ENCODE measurements at regions of chr19 and their contacts with region 1.

Region 1: GRCh38 chr19:39792999-39793546 is 14.4 kb downstream of the LEUTX start:
- DNase-seq: peak; percentile 100
- ATAC-seq: peak; percentile 98
- H3K4me3 ChIP-seq: peak overlapping the region; percentile 29 to 42
- H3K27ac ChIP-seq: no peak overlapping the region
- H3K4me1 ChIP-seq: peaks cover 13% of the 10 kb centered on the region
- H3K27me3 ChIP-seq: peaks cover 29% of the 10 kb centered on the region
- CTCF ChIP-seq: no peak

Region 2: DNA sequence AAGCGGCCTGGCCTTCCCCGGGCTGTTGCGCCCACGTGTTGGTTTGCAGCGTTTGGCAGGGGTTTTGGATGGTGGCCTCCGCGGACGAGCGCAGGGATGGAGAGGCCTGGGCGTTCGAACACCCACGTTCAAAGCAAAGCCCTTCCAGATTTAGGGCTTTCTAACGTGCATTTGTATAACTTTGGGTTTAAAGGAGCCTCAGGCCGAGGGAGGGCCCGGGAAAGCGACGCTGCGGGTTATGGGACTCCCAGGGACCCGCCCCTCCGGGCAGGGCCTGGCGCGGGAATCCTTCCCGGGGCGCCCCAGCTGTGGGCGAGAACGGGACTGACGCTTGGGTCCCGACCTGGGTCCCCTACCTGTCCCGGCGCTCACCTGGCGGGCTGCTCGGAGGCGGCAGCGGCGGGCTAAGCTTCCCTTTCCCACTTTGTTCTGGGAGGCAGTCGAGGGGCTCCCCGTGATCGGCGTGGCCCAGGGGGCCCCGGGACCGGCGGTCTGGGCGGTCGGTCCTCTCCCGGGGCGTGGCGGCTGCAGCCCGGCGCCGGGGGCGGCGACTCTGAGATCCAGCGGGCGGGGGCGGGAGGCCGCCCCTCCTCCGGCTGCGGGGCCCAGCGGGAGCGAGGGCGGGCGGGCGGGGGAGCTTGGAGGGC is 817.7 kb before region 1 on chr19 and contains the start of gene FBXO17:
- CTCF ChIA-PET with region 1: interaction called, 12 read pairs
- POLR2A ChIA-PET with region 1: no interaction called
- in situ Hi-C with region 1: no loop called
- intact Hi-C with region 1: no loop called
- DNase-seq: peak; percentile 81
- ATAC-seq: peak; percentile 89
- H3K4me3 ChIP-seq: peak within 1 kb of the TSS; percentile 50 to 59
- H3K27ac ChIP-seq: peak within 1 kb of the TSS; percentile 97
- H3K4me1 ChIP-seq: peaks cover 48% of the 10 kb centered on the region
- H3K27me3 ChIP-seq: no peaks in the 10 kb centered on the region
- CTCF ChIP-seq: no peak
- total RNA-seq, gene FBXO17: 411 TPM

Region 3: GRCh38 chr19:39599116-39599515 is 194.0 kb before region 1 on chr19:
- CTCF ChIA-PET with region 1: interaction called, 11 read pairs
- POLR2A ChIA-PET with region 1: no interaction called
- in situ Hi-C with region 1: no loop called
- intact Hi-C with region 1: no loop called
- DNase-seq: no peak
- ATAC-seq: no peak
- H3K4me3 ChIP-seq: no peak overlapping the region
- H3K27ac ChIP-seq: no peak overlapping the region
- H3K4me1 ChIP-seq: no peaks in the 10 kb centered on the region
- H3K27me3 ChIP-seq: peaks cover 88% of the 10 kb centered on the region
- CTCF ChIP-seq: 0 out of 2 replicates have a peak, but pooled peaks have one; percentile 1

Region 4: DNA sequence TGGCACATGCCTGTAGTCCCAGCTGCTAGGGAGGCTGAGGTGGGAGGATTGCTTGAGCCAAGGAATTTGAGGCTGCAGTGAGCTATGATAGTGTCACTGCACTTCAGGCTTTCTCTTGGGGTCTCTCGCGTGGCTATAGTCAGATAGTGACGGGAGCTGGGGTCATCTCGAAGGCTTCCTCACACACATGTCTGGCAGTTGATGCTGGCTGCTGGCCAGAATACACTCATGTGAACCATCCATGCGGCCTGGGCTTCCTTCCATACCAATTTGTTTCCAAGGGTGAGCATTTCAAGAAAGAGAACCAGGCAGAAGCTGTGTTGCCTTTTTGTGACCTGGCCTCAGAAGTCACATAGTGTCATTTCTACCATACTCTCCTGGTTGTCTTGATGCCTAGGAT is 12.0 kb after region 1 on chr19:
- CTCF ChIA-PET with region 1: interaction called, 248 read pairs
- POLR2A ChIA-PET with region 1: interaction called, 10 read pairs
- in situ Hi-C with region 1: no loop called
- intact Hi-C with region 1: no loop called
- DNase-seq: no peak
- ATAC-seq: no peak
- H3K4me3 ChIP-seq: no peak overlapping the region
- H3K27ac ChIP-seq: no peak overlapping the region
- H3K4me1 ChIP-seq: peaks cover 6% of the 10 kb centered on the region; the same call in 1 of the 2 replicates
- H3K27me3 ChIP-seq: peaks cover 29% of the 10 kb centered on the region
- CTCF ChIP-seq: no peak

Region 5: DNA sequence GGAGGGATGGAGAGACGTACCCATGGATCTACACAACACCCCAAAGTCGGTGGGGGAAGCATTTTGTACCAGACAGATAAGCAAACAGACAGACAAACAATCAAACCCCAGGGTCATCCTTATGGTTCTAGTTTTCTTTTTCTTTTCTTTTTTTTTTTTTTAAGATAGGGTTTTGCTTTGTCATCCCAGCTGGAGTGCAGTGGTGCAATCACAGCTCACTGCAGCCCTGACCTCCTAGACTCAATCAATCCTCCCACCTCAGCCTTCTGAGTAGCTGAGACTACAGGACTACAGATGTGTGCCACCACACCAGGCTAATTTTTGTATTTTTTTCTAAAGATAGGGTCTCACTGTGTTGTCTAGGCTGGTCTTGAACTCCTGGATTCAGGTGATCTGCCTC is 71.0 kb after region 1 on chr19:
- CTCF ChIA-PET with region 1: interaction called, 12 read pairs
- POLR2A ChIA-PET with region 1: no interaction called
- in situ Hi-C with region 1: no loop called
- intact Hi-C with region 1: no loop called
- DNase-seq: no peak
- ATAC-seq: no peak
- H3K4me3 ChIP-seq: no peak overlapping the region
- H3K27ac ChIP-seq: no peak overlapping the region
- H3K4me1 ChIP-seq: peaks cover 4% of the 10 kb centered on the region
- H3K27me3 ChIP-seq: peaks cover 12% of the 10 kb centered on the region; the same call in 1 of the 2 replicates
- CTCF ChIP-seq: no peak

Region 6: DNA sequence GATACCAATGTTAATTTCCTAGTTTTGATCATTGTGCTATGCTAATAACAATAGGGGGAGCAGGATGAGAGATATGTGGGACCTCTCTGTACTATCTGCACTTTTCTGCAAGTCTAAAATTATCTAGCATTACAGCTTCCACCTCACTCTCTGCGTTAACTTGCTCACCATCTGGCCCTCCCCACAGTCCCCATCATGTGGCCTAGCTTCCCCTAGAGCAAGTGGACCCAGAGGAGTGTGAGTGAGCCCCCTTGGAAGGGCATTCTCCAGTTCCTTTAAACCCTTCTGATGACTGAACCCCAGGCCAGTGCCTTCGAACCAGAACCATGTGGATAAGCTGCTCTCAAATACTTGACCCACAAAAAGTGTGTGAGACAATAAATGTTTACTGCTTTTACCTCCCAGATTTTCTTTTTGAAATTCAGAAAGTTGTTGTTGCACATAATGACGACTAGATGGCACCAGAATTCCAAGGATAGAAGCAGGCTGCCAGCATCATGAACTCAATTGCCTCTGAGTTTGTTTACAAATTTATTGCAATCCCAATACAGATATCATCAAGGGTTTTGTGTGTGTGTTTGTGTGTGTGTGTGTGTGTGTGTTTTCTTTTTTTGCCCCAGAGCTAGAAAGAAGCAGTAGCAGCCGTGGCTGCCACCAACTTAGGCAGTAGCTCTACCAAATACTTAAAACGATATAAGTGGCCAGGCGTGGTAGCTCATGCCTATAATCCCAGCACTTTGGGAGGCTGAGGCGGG is 346.6 kb after region 1 on chr19:
- CTCF ChIA-PET with region 1: interaction called, 12 read pairs
- POLR2A ChIA-PET with region 1: interaction called, 4 read pairs
- in situ Hi-C with region 1: no loop called
- intact Hi-C with region 1: no loop called
- DNase-seq: peak; percentile 100
- ATAC-seq: peak; percentile 76
- H3K4me3 ChIP-seq: no peak overlapping the region
- H3K27ac ChIP-seq: no peak overlapping the region
- H3K4me1 ChIP-seq: no peaks in the 10 kb centered on the region
- H3K27me3 ChIP-seq: peaks cover 43% of the 10 kb centered on the region
- CTCF ChIP-seq: no peak